ENCODE measurements at regions of chr5 and their contacts with region 1.

Region 1: GRCh38 chr5:134586866-134587524 is 45.6 kb downstream of the SAR1B start:
- DNase-seq: peak; percentile 64 to 78 (median 74)
- ATAC-seq: peak; percentile 97
- H3K4me3 ChIP-seq: no peak overlapping the region
- H3K27ac ChIP-seq: no peak overlapping the region
- H3K4me1 ChIP-seq: peaks cover under 1 to 7% of the 10 kb centered on the region in 2 experiments; a peak in 3 of 5 replicates
- H3K27me3 ChIP-seq: no peaks in the 10 kb centered on the region
- CTCF ChIP-seq: peak; percentile 82 to 95 (median 92)
- EP300 ChIP-seq: no peak
- POLR2A ChIP-seq: no peak
- RAD21 ChIP-seq: peak; percentile 63 to 90

Region 2: GRCh38 chr5:134026521-134027268 is 560.3 kb before region 1 on chr5:
- CTCF ChIA-PET with region 1: no interaction called
- POLR2A ChIA-PET with region 1: no interaction called
- in situ Hi-C with region 1: loop called (anchors 25 kb)
- intact Hi-C with region 1: no loop called
- DNase-seq: peak; percentile 65 to 73 (median 68)
- ATAC-seq: peak; percentile 100
- H3K4me3 ChIP-seq: no peak overlapping the region
- H3K27ac ChIP-seq: no peak overlapping the region
- H3K4me1 ChIP-seq: no peaks in the 10 kb centered on the region
- H3K27me3 ChIP-seq: peaks cover 7 to 29% of the 10 kb centered on the region in 2 experiments; a peak in 3 of 5 replicates
- CTCF ChIP-seq: peak; percentile 74 to 83 (median 82)
- EP300 ChIP-seq: no peak
- POLR2A ChIP-seq: no peak
- RAD21 ChIP-seq: peak; percentile 17 to 51; a peak in 2 of 4 replicates

Region 3: GRCh38 chr5:134184155-134185135 is 402.6 kb before region 1 on chr5:
- CTCF ChIA-PET with region 1: no interaction called
- POLR2A ChIA-PET with region 1: no interaction called
- in situ Hi-C with region 1: loop called (anchors 10 kb)
- intact Hi-C with region 1: loop called (anchors 5 kb)
- DNase-seq: peak; percentile 81 to 83 (median 83)
- ATAC-seq: peak; percentile 90
- H3K4me3 ChIP-seq: no peak overlapping the region
- H3K27ac ChIP-seq: no peak overlapping the region
- H3K4me1 ChIP-seq: peaks cover 12 to 19% of the 10 kb centered on the region in 2 experiments; a peak in 4 of 5 replicates
- H3K27me3 ChIP-seq: no peaks in the 10 kb centered on the region
- CTCF ChIP-seq: peak; percentile 89 to 92 (median 90)
- EP300 ChIP-seq: no peak
- POLR2A ChIP-seq: no peak
- RAD21 ChIP-seq: peak; percentile 89 to 98

Region 4: DNA sequence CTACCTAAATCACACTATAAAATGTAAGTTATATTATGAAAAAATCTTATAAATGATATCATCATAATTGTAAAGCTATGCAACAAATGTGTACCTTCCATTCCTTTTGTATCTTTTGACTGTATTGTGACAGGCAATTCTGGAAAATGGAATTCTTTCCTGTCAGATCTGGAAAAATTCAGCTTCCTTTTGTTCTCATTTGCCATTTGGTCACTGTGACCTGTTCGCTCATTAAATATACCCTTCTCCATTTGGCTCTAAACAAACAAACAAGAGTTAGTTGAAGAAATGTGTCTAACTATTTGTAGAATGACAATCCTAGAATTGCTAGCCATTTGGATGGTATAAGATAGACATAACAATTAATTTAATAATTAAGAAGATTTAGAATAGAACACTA is 282.7 kb before region 1 on chr5:
- CTCF ChIA-PET with region 1: interaction called, 6 read pairs
- POLR2A ChIA-PET with region 1: interaction called, 3 read pairs
- in situ Hi-C with region 1: loop called (anchors 5 kb)
- intact Hi-C with region 1: loop called (anchors 2 kb)
- DNase-seq: no peak
- ATAC-seq: no peak
- H3K4me3 ChIP-seq: no peak overlapping the region
- H3K27ac ChIP-seq: no peak overlapping the region
- H3K4me1 ChIP-seq: no peaks in the 10 kb centered on the region
- H3K27me3 ChIP-seq: no peaks in the 10 kb centered on the region
- CTCF ChIP-seq: no peak
- EP300 ChIP-seq: no peak
- POLR2A ChIP-seq: no peak
- RAD21 ChIP-seq: no peak

Region 5: DNA sequence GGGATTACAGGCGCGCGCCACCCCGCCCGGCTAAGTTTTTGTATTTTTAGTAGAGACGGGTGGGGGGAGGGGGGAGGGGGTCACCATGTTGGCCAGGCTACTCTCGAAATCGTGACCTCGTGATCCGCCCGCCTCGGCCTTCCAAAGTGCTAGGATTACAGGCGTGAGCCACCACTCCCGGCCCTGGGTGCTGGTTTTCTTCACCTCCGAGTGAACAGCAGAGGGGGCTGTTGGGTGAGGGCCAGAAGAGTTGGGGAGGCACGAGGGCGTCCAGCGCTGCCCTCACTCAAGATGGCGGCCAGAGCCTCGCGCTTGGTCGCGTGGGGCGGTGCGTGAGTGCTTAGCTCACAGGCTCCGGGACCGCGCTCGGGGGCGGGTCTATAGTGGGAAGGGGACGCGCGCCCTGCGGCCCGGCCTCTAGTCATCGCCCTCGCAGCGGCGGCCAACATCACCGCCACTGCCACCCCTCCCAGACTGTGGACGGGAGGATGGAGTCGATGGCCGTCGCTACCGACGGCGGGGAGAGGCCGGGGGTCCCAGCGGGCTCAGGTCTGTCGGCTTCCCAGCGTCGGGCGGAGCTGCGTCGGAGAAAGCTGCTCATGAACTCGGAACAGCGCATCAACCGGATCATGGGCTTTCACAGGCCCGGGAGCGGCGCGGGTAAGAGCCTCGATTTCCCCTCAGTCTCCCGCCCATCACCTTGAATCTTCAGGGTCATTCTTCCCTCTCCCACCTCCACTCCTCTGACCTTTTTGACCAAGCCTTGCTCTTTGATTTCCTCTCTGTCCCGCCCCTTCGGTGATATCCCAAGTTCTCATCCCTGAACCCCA is 151.4 kb after region 1 on chr5 and contains the start of gene CAMLG:
- CTCF ChIA-PET with region 1: no interaction called
- POLR2A ChIA-PET with region 1: no interaction called
- in situ Hi-C with region 1: no loop called
- intact Hi-C with region 1: loop called (anchors 2 kb)
- DNase-seq: peak; percentile 93 to 99 (median 94)
- ATAC-seq: peak; percentile 98
- H3K4me3 ChIP-seq: peak within 1 kb of the TSS; percentile 71
- H3K27ac ChIP-seq: peak within 1 kb of the TSS; percentile 71
- H3K4me1 ChIP-seq: peaks cover 13 to 15% of the 10 kb centered on the region in 2 experiments
- H3K27me3 ChIP-seq: no peaks in the 10 kb centered on the region
- CTCF ChIP-seq: peak; percentile 77 to 84 (median 83)
- EP300 ChIP-seq: no peak
- POLR2A ChIP-seq: peak; percentile 85
- RAD21 ChIP-seq: peak; percentile 62 to 81
- polyA plus RNA-seq, gene CAMLG: 16.3 to 17.3 TPM

Measured in K562 (cell line).